PC-9 (cell line): ENCODE measurements at regions of chr3 and their contacts with region 1.

Region 1: GRCh38 chr3:172622916-172623700 is 87.8 kb downstream of the NCEH1 start:
- DNase-seq: peak; percentile 46 to 87
- H3K4me3 ChIP-seq: peak overlapping the region; percentile 30; the same call in 1 of the 2 replicates
- H3K27ac ChIP-seq: peak overlapping the region; percentile 38; the same call in 1 of the 2 replicates
- H3K4me1 ChIP-seq: peaks cover 37% of the 10 kb centered on the region
- H3K27me3 ChIP-seq: no peaks in the 10 kb centered on the region
- CTCF ChIP-seq: peak; percentile 95

Region 2: GRCh38 chr3:172461530-172462138 is 161.5 kb before region 1 on chr3:
- CTCF ChIA-PET with region 1: interaction called, 13 read pairs
- POLR2A ChIA-PET with region 1: no interaction called
- intact Hi-C with region 1: no loop called
- DNase-seq: no peak
- H3K4me3 ChIP-seq: no peak overlapping the region
- H3K27ac ChIP-seq: no peak overlapping the region
- H3K4me1 ChIP-seq: peaks cover 17% of the 10 kb centered on the region
- H3K27me3 ChIP-seq: no peaks in the 10 kb centered on the region
- CTCF ChIP-seq: peak; percentile 97

Region 3: GRCh38 chr3:172607305-172608121 is 15.6 kb before region 1 on chr3:
- CTCF ChIA-PET with region 1: interaction called, 16 read pairs
- POLR2A ChIA-PET with region 1: no interaction called
- intact Hi-C with region 1: no loop called
- DNase-seq: peak in 1 of 2 experiments; percentile 53
- H3K4me3 ChIP-seq: no peak overlapping the region
- H3K27ac ChIP-seq: no peak overlapping the region
- H3K4me1 ChIP-seq: 0 out of 2 replicates have a peak, but pooled peaks cover 7% of the 10 kb centered on the region
- H3K27me3 ChIP-seq: no peaks in the 10 kb centered on the region
- CTCF ChIP-seq: no peak

Region 4: DNA sequence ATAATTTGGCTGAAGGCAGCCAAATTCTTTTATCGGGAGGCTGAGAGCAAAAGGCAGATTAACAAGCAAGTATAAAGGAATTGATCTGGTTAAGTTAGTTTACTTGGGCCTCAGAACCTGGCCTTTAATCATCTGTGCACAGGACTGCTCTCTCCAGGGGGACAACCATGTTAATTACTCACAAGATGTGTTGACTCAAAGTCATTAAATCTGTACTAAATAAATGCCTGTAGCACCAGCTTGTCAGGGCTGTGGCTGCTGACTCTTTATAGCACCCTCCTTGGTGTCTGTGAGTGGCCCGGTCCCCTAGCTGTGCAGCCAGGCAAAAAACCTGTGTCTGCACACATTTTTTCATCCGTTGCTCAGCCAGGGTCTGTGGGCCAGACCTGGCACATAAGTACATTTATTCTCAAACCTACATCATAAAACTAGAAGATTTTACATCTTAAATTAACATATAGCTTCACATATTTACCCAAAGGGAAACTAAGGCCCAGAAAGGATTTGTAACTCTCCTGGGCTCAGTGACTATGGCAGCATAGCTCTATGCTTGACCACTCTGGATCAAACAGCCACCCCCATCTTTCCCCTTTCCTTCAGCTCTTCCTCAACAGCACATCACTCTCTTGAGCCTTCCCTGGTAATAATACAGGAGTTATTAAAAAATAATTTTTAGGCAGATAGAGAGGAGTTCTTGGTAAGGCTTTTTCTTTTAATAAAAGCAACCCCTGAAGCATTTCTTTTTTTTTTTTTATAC is 36.3 kb after region 1 on chr3:
- CTCF ChIA-PET with region 1: interaction called, 5 read pairs
- POLR2A ChIA-PET with region 1: interaction called, 10 read pairs
- intact Hi-C with region 1: no loop called
- DNase-seq: peak in 1 of 2 experiments; percentile 75
- H3K4me3 ChIP-seq: no peak overlapping the region
- H3K27ac ChIP-seq: peak overlapping the region; percentile 65
- H3K4me1 ChIP-seq: peaks cover 26% of the 10 kb centered on the region
- H3K27me3 ChIP-seq: no peaks in the 10 kb centered on the region
- CTCF ChIP-seq: no peak

Region 5: DNA sequence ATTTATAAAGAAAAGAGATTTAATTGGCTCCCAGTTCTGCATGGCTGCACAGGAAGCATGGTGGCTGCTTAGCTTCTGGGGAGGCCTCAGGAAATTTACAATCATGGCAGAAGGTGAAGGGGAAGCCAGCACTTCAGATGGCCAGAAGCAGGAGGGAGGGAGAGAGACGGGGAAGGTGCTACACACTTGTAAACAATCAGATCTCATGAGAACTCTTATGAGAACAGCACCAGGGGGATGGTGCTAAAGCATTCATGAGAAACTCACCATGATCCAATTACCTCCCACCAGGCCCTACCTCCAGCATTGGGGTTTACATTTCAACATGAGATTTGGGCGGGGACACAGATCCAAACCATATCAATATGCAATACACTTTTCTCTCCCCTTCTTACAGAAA is 201.1 kb after region 1 on chr3:
- CTCF ChIA-PET with region 1: interaction called, 11 read pairs
- POLR2A ChIA-PET with region 1: no interaction called
- intact Hi-C with region 1: no loop called
- DNase-seq: no peak
- H3K4me3 ChIP-seq: no peak overlapping the region
- H3K27ac ChIP-seq: no peak overlapping the region
- H3K4me1 ChIP-seq: no peaks in the 10 kb centered on the region
- H3K27me3 ChIP-seq: no peaks in the 10 kb centered on the region
- CTCF ChIP-seq: no peak